B cell (primary cell): ENCODE measurements at regions of chr17 and their contacts with region 1.

Region 1: GRCh38 chr17:17496189-17497064 is at the start of gene RASD1:
- DNase-seq: peak; percentile 86
- ATAC-seq: peak; percentile 88
- H3K4me3 ChIP-seq: peak within 1 kb of the TSS; percentile 42 to 67 (median 58)
- H3K4me3 Mint-ChIP-seq: peak within 1 kb of the TSS; percentile 92
- H3K27ac ChIP-seq: no peak within 1 kb of the TSS
- H3K27ac Mint-ChIP-seq: no peak within 1 kb of the TSS
- H3K4me1 ChIP-seq: peaks cover 24% of the 10 kb centered on the region in 2 donors
- H3K4me1 Mint-ChIP-seq: peaks cover 22% of the 10 kb centered on the region
- H3K27me3 ChIP-seq: peaks cover 0 to 29% (median 6%) of the 10 kb centered on the region in 4 experiments
- H3K27me3 Mint-ChIP-seq: peaks cover 8% of the 10 kb centered on the region
- CTCF ChIP-seq: peak; percentile 94
- total RNA-seq, gene RASD1: 3.2 and 4.4 TPM in 2 replicates

Region 2: GRCh38 chr17:17275971-17276370 is 220.5 kb before region 1 on chr17:
- CTCF ChIA-PET with region 1: no interaction called
- POLR2A ChIA-PET with region 1: no interaction called
- intact Hi-C with region 1: no loop called
- DNase-seq: no peak
- ATAC-seq: no peak
- H3K4me3 ChIP-seq: no peak overlapping the region
- H3K4me3 Mint-ChIP-seq: no peak overlapping the region
- H3K27ac ChIP-seq: no peak overlapping the region
- H3K27ac Mint-ChIP-seq: no peak overlapping the region
- H3K4me1 ChIP-seq: peaks cover 13 to 14% of the 10 kb centered on the region in 2 donors
- H3K4me1 Mint-ChIP-seq: peaks cover 30% of the 10 kb centered on the region
- H3K27me3 ChIP-seq: no peaks in the 10 kb centered on the region
- H3K27me3 Mint-ChIP-seq: no peaks in the 10 kb centered on the region
- CTCF ChIP-seq: no peak

Region 3: DNA sequence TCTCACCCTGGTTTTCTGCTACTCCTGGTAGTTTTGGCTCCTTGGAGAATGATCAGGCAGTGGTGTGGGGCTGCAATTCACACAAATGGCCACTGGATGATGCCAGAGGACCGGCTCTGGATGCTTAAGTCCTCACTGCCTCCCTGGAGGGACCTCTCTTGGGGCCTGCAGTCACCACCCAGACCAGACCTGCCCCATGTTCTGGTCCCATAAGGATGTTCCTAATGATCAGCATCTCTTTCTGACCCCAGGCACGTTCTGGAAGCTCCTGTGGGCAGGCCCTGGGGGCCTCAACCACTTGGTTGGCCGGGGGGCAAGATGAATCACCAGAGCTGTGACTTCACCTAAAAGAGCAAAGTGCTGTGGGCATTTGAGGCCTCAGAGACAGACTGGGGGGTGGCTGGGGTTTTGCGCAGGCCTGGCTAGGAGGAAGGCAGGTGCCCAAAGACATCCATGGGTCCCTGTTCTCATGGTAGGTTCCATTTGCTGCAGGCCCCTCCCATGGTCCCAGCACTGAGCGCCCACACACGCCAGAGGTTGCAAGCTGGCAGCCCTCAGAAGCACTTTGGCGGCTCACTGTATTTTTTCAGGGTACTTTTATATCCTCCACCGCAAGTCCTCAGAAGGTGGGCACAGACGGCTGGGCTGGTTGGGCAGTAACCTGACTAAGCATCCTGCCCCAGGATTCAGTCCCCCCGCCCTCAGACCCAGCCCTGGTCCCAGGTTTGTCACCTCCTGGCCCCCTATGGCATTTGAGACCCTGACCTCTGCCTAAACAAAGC is 140.1 kb before region 1 on chr17:
- CTCF ChIA-PET with region 1: interaction called, 30 read pairs
- POLR2A ChIA-PET with region 1: no interaction called
- intact Hi-C with region 1: loop called (anchors 1 kb)
- DNase-seq: peak; percentile 79
- ATAC-seq: peak; percentile 87
- H3K4me3 ChIP-seq: no peak overlapping the region
- H3K4me3 Mint-ChIP-seq: no peak overlapping the region
- H3K27ac ChIP-seq: no peak overlapping the region
- H3K27ac Mint-ChIP-seq: no peak overlapping the region
- H3K4me1 ChIP-seq: peaks cover 3 to 7% of the 10 kb centered on the region in 2 donors
- H3K4me1 Mint-ChIP-seq: peaks cover 4% of the 10 kb centered on the region
- H3K27me3 ChIP-seq: no peaks in the 10 kb centered on the region
- H3K27me3 Mint-ChIP-seq: peaks cover 4% of the 10 kb centered on the region
- CTCF ChIP-seq: peak; percentile 93

Region 4: GRCh38 chr17:17433000-17433703 is 63.3 kb before region 1 on chr17:
- CTCF ChIA-PET with region 1: no interaction called
- POLR2A ChIA-PET with region 1: no interaction called
- intact Hi-C with region 1: no loop called
- DNase-seq: no peak
- ATAC-seq: no peak
- H3K4me3 ChIP-seq: no peak overlapping the region
- H3K4me3 Mint-ChIP-seq: no peak overlapping the region
- H3K27ac ChIP-seq: no peak overlapping the region
- H3K27ac Mint-ChIP-seq: no peak overlapping the region
- H3K4me1 ChIP-seq: no peaks in the 10 kb centered on the region
- H3K4me1 Mint-ChIP-seq: no peaks in the 10 kb centered on the region
- H3K27me3 ChIP-seq: no peaks in the 10 kb centered on the region
- H3K27me3 Mint-ChIP-seq: peaks cover 10% of the 10 kb centered on the region
- CTCF ChIP-seq: no peak

Region 5: GRCh38 chr17:17468217-17469010 is 28.0 kb before region 1 on chr17:
- CTCF ChIA-PET with region 1: no interaction called
- POLR2A ChIA-PET with region 1: no interaction called
- intact Hi-C with region 1: no loop called
- DNase-seq: no peak
- ATAC-seq: no peak
- H3K4me3 ChIP-seq: no peak overlapping the region
- H3K4me3 Mint-ChIP-seq: no peak overlapping the region
- H3K27ac ChIP-seq: no peak overlapping the region
- H3K27ac Mint-ChIP-seq: no peak overlapping the region
- H3K4me1 ChIP-seq: no peaks in the 10 kb centered on the region
- H3K4me1 Mint-ChIP-seq: no peaks in the 10 kb centered on the region
- H3K27me3 ChIP-seq: no peaks in the 10 kb centered on the region
- H3K27me3 Mint-ChIP-seq: peaks cover 43% of the 10 kb centered on the region
- CTCF ChIP-seq: no peak

Region 6: GRCh38 chr17:17568749-17569195 is 72.3 kb after region 1 on chr17:
- CTCF ChIA-PET with region 1: interaction called, 4 read pairs
- POLR2A ChIA-PET with region 1: no interaction called
- intact Hi-C with region 1: loop called (anchors 2 kb)
- DNase-seq: peak; percentile 30
- ATAC-seq: no peak
- H3K4me3 ChIP-seq: no peak overlapping the region
- H3K4me3 Mint-ChIP-seq: no peak overlapping the region
- H3K27ac ChIP-seq: no peak overlapping the region
- H3K27ac Mint-ChIP-seq: no peak overlapping the region
- H3K4me1 ChIP-seq: no peaks in the 10 kb centered on the region
- H3K4me1 Mint-ChIP-seq: no peaks in the 10 kb centered on the region
- H3K27me3 ChIP-seq: no peaks in the 10 kb centered on the region
- H3K27me3 Mint-ChIP-seq: no peaks in the 10 kb centered on the region
- CTCF ChIP-seq: peak; percentile 45

Region 7: GRCh38 chr17:17613708-17614114 is 117.3 kb after region 1 on chr17:
- CTCF ChIA-PET with region 1: interaction called, 25 read pairs
- POLR2A ChIA-PET with region 1: no interaction called
- intact Hi-C with region 1: no loop called
- DNase-seq: peak; percentile 57
- ATAC-seq: peak; percentile 66
- H3K4me3 ChIP-seq: no peak overlapping the region
- H3K4me3 Mint-ChIP-seq: no peak overlapping the region
- H3K27ac ChIP-seq: no peak overlapping the region
- H3K27ac Mint-ChIP-seq: no peak overlapping the region
- H3K4me1 ChIP-seq: peaks cover 0 to 4% of the 10 kb centered on the region in 2 donors
- H3K4me1 Mint-ChIP-seq: no peaks in the 10 kb centered on the region
- H3K27me3 ChIP-seq: no peaks in the 10 kb centered on the region
- H3K27me3 Mint-ChIP-seq: no peaks in the 10 kb centered on the region
- CTCF ChIP-seq: peak; percentile 79

Region 8: DNA sequence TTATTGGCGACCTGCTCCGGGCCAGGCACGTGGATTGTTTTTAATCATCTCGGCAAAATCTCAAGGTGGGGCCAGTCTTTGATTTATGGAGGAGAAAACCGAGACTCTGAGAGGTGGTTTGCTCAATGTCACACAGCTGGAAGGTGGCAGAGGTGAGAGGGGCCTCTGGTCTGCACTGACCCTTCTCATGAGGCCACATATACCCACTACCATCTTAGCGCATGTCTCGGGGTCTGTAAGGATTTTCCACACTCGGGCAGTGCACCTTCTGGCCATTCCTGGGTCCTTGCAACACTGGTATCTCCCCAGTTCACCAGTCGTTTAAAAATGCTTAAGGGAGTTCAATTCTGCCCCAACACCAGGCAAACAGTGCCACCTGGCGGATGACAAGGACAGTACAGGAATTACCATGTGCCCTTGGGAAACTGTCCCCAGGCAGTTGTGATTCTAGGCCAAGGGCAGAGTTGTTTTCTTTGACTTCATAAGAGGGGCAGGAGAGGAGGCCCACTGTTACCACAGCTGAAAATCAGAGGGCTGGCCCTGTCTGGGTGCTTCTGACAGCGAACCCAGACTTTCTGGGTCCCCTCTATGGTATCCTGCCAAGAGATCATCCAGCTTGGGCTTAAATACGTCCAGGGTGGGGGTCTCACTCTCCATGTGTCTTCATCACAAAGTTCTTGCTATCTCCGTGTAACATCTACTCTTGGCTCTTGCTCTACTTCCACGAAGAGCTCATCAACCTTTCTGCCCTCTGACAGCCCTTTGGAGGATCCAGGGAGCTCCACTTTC is 145.4 kb after region 1 on chr17:
- CTCF ChIA-PET with region 1: interaction called, 121 read pairs
- POLR2A ChIA-PET with region 1: no interaction called
- intact Hi-C with region 1: no loop called
- DNase-seq: peak; percentile 83
- ATAC-seq: peak; percentile 88
- H3K4me3 ChIP-seq: no peak overlapping the region
- H3K4me3 Mint-ChIP-seq: no peak overlapping the region
- H3K27ac ChIP-seq: no peak overlapping the region
- H3K27ac Mint-ChIP-seq: no peak overlapping the region
- H3K4me1 ChIP-seq: no peaks in the 10 kb centered on the region
- H3K4me1 Mint-ChIP-seq: no peaks in the 10 kb centered on the region
- H3K27me3 ChIP-seq: peaks cover 0 to 2% (median 0%) of the 10 kb centered on the region in 4 experiments
- H3K27me3 Mint-ChIP-seq: peaks cover 15% of the 10 kb centered on the region
- CTCF ChIP-seq: peak; percentile 80